Activated CD4-positive, alpha-beta T cell treated with anti-CD3 and anti-CD28 coated beads for 36 hours (primary cell): ENCODE measurements at regions of chr5 and their contacts with region 1.

Region 1: DNA sequence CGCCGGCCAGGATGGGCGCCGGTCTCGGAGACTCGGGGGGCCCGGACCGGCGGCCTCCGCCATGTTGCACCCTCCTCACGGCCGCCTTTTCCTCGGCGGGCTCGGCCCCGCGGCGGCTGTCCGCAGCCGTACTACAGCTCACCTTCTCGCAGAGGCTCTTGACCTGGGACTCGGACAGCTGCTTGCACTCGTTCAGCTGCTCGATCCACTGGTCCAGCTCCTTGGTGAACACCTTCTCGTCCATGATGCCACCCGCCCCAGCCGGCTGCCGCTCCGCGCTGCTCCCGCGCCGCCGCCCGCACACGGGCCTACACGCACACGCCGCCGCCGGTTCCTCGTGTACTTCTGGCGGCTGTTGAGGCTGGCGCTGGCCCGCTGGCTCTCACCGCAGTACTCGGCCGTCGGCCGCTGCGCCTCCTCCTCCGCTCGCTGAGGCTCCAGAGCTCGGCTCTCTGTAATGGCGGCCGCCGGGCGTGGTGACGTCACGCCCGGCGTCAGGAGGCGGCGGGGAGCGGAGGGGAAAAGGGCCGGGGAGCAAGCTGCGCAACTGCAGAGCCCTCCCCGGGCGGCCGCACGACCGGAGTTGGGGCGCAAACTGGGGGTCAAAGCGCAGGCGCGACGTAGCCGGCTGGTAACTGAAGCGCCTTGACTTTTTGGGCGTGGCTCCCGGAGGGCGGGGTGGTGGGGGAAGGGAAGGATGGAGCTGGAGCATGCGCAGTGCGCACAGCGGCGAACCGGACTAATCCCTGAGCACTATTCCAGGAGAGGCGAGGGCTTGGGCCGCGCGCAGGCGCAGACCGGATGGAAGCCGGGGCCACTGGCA is at the start of gene PPP2CA:
- DNase-seq: peak; percentile 99
- ATAC-seq: peak; percentile 88
- H3K4me3 Mint-ChIP-seq: peak within 1 kb of the TSS; percentile 97
- H3K27ac Mint-ChIP-seq: peak within 1 kb of the TSS; percentile 98
- H3K4me1 Mint-ChIP-seq: peaks cover 47% of the 10 kb centered on the region
- H3K27me3 Mint-ChIP-seq: no peaks in the 10 kb centered on the region
- total RNA-seq, gene PPP2CA: 148 to 154 TPM

Region 2: DNA sequence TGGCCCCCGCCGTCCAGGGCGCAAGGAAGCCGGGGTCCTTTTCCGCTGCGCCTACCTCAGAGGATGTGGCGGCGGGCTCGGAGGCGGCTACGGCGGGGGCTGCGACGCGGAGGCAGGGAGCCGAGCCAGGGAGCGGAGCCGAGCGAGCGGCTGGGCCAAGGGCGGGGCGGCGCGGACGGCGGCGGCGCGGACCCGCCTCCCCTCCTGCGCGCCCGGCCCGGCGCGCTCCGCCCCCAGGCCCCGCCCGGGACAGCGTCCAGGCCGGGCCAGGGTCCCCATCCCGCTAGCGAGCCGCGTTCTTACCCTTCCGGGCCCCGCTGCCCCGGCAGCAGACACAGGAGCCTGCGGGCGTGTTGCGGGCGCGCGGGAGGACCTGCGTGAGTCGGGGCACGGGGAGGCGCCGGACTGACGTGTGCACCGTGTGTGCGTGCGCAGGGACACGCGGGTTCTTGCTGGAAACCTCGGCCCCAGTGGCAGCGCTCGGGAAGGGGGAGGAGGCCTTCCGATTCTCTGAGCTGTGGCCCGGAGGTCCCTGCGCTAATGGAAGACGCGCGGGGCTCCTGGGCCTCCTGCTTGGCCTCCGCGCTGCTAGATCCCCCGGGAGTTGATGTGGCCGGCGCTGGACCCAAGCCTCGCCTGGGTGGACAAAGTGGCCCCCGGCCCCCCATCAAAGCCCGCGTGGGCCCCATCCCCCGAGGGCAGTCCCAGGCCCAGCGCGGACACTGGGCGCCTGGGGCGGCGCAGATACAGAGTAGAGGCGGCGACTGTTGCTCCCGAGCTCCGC is 221.0 kb before region 1 on chr5 and contains the start of gene VDAC1:
- CTCF ChIA-PET with region 1: no interaction called
- POLR2A ChIA-PET with region 1: interaction called, 6 read pairs
- intact Hi-C with region 1: loop called in 1 of 2 experiments (anchors 1 kb)
- DNase-seq: peak; percentile 92
- ATAC-seq: peak; percentile 85
- H3K4me3 Mint-ChIP-seq: peak within 1 kb of the TSS; percentile 94
- H3K27ac Mint-ChIP-seq: peak within 1 kb of the TSS; percentile 98
- H3K4me1 Mint-ChIP-seq: peaks cover 44% of the 10 kb centered on the region
- H3K27me3 Mint-ChIP-seq: no peaks in the 10 kb centered on the region
- total RNA-seq, gene VDAC1: 482 to 486 TPM

Region 3: GRCh38 chr5:134132372-134133034 is 93.3 kb before region 1 on chr5:
- CTCF ChIA-PET with region 1: no interaction called
- POLR2A ChIA-PET with region 1: no interaction called
- intact Hi-C with region 1: no loop called
- DNase-seq: peak; percentile 86
- ATAC-seq: peak; percentile 60
- H3K4me3 Mint-ChIP-seq: peak overlapping the region; percentile 41
- H3K27ac Mint-ChIP-seq: peak overlapping the region; percentile 87
- H3K4me1 Mint-ChIP-seq: peaks cover 98% of the 10 kb centered on the region
- H3K27me3 Mint-ChIP-seq: no peaks in the 10 kb centered on the region

Region 4: GRCh38 chr5:134289509-134290113 is 63.8 kb after region 1 on chr5:
- CTCF ChIA-PET with region 1: interaction called, 4 read pairs
- POLR2A ChIA-PET with region 1: no interaction called
- intact Hi-C with region 1: loop called in 1 of 2 experiments (anchors 5 kb)
- DNase-seq: peak; percentile 57
- ATAC-seq: peak; percentile 70
- H3K4me3 Mint-ChIP-seq: no peak overlapping the region
- H3K27ac Mint-ChIP-seq: no peak overlapping the region
- H3K4me1 Mint-ChIP-seq: peaks cover 4% of the 10 kb centered on the region
- H3K27me3 Mint-ChIP-seq: no peaks in the 10 kb centered on the region

Region 5: GRCh38 chr5:134648425-134649162 is 422.8 kb after region 1 on chr5 and contains the start of gene SEC24A:
- CTCF ChIA-PET with region 1: no interaction called
- POLR2A ChIA-PET with region 1: no interaction called
- intact Hi-C with region 1: loop called in 1 of 2 experiments (anchors 1 kb)
- DNase-seq: peak; percentile 96
- ATAC-seq: peak; percentile 88
- H3K4me3 Mint-ChIP-seq: peak within 1 kb of the TSS; percentile 87
- H3K27ac Mint-ChIP-seq: peak within 1 kb of the TSS; percentile 99
- H3K4me1 Mint-ChIP-seq: peaks cover 30% of the 10 kb centered on the region
- H3K27me3 Mint-ChIP-seq: no peaks in the 10 kb centered on the region
- total RNA-seq, gene SEC24A: 32.2 to 41.3 TPM

Region 6: GRCh38 chr5:134845852-134846640 is 620.2 kb after region 1 on chr5 and contains the start of gene C5orf24:
- CTCF ChIA-PET with region 1: no interaction called
- POLR2A ChIA-PET with region 1: no interaction called
- intact Hi-C with region 1: loop called in 1 of 2 experiments (anchors 5 kb)
- DNase-seq: peak; percentile 96
- ATAC-seq: peak; percentile 95
- H3K4me3 Mint-ChIP-seq: peak within 1 kb of the TSS; percentile 95
- H3K27ac Mint-ChIP-seq: peak within 1 kb of the TSS; percentile 97
- H3K4me1 Mint-ChIP-seq: peaks cover 29% of the 10 kb centered on the region
- H3K27me3 Mint-ChIP-seq: no peaks in the 10 kb centered on the region
- total RNA-seq, gene C5orf24: 24.5 to 24.9 TPM